ENCODE measurements at regions of chr18 and their contacts with region 1.

Region 1: GRCh38 chr18:29962579-29962978 is 1080.0 kb downstream of the DSC3 start:
- DNase-seq: no peak
- H3K4me3 Mint-ChIP-seq: no peak overlapping the region
- H3K27ac Mint-ChIP-seq: no peak overlapping the region
- H3K4me1 Mint-ChIP-seq: no peaks in the 10 kb centered on the region
- H3K27me3 Mint-ChIP-seq: no peaks in the 10 kb centered on the region

Region 2: GRCh38 chr18:30132958-30133357 is 170.4 kb after region 1 on chr18:
- intact Hi-C with region 1: loop called (anchors 10 kb)
- DNase-seq: no peak
- H3K4me3 Mint-ChIP-seq: no peak overlapping the region
- H3K27ac Mint-ChIP-seq: no peak overlapping the region
- H3K4me1 Mint-ChIP-seq: no peaks in the 10 kb centered on the region
- H3K27me3 Mint-ChIP-seq: no peaks in the 10 kb centered on the region

Measured in activated T-helper 1 cell treated with anti-CD3 and anti-CD28 coated beads, Interleukin-12 subunit alpha, Interleukin-12 subunit beta, Interleukin-2, Interleukin-4 antibody, amounts not matched to agents 30 ng/mL and 10 ng/mL and 1 ng/mL, durations not matched to agents 14 hours and 24 hours and 36 hours (primary cell).